ENCODE measurements at regions of chr1 and their contacts with region 1.

Region 1: DNA sequence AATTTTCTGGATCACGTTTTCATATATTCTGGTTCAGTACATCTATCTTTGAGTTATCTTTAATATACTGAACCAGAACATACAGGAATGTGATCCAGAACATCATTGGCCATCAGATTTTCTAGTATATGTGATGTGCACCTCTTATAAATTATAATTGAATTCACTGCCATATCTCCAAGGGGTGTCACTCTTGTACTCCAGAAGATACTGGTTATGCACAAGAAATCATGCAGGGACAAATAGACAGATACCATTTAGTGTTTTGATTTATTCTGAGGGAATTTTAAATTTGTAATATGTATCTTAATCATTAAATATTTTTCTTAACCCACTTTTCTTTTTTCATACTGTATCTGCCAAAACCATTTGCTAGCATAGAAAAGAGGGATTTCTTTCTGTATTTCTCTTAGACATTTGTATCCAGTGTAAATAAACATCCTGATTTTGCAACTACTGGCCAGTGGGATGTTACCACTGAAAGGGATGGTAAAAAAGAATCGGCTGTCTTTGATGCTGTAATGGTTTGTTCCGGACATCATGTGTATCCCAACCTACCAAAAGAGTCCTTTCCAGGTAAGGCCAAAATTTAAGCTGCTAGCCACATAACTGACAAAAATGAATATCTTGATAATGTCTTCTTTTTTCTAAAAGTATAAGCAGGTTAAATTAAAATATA is 16.7 kb downstream of the FMO3 start:
- DNase-seq: no peak
- H3K4me3 ChIP-seq: no peak overlapping the region
- H3K27ac ChIP-seq: no peak overlapping the region
- H3K4me1 ChIP-seq: no peaks in the 10 kb centered on the region
- H3K27me3 ChIP-seq: no peaks in the 10 kb centered on the region
- CTCF ChIP-seq: no peak
- EP300 ChIP-seq: no peak
- POLR2A ChIP-seq: no peak

Region 2: GRCh38 chr1:171038284-171038683 is 69.1 kb before region 1 on chr1:
- in situ Hi-C with region 1: no loop called
- intact Hi-C with region 1: no loop called
- DNase-seq: no peak
- H3K4me3 ChIP-seq: no peak overlapping the region
- H3K27ac ChIP-seq: no peak overlapping the region
- H3K4me1 ChIP-seq: no peaks in the 10 kb centered on the region
- H3K27me3 ChIP-seq: no peaks in the 10 kb centered on the region
- CTCF ChIP-seq: no peak
- EP300 ChIP-seq: no peak
- POLR2A ChIP-seq: no peak

Region 3: DNA sequence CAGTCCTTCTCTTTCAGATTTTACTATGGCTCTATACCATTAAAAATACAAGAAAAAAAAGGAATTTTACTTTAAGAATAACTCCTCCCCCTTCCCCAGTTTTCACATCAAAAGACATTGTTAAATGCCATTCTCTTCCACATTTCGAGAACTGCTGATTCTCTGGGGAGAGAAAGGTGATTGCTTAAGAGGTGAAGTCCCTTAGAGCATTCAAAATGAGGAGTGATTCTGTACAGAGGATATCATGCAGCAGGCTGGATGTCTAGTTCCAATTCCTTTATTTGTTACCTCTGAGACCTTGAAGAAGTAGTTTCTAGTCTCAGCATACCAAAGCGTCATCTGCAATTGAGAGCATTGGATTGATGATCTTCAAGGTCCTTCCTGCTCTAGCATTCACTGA is 30.2 kb after region 1 on chr1:
- in situ Hi-C with region 1: no loop called
- intact Hi-C with region 1: loop called (anchors 2 kb)
- DNase-seq: no peak
- H3K4me3 ChIP-seq: no peak overlapping the region
- H3K27ac ChIP-seq: no peak overlapping the region
- H3K4me1 ChIP-seq: peaks cover 0 to 14% (median 2%) of the 10 kb centered on the region in 4 donors
- H3K27me3 ChIP-seq: no peaks in the 10 kb centered on the region
- CTCF ChIP-seq: no peak
- EP300 ChIP-seq: no peak
- POLR2A ChIP-seq: no peak